ENCODE measurements at regions of chr11 and their contacts with region 1.

Region 1: GRCh38 chr11:62217191-62217748 is 8.8 kb downstream of the SCGB2A1 start:
- DNase-seq: no peak
- ATAC-seq: no peak
- H3K4me3 Mint-ChIP-seq: no peak overlapping the region
- H3K27ac Mint-ChIP-seq: no peak overlapping the region
- H3K4me1 Mint-ChIP-seq: no peaks in the 10 kb centered on the region
- H3K27me3 Mint-ChIP-seq: peaks cover 25% of the 10 kb centered on the region

Region 2: DNA sequence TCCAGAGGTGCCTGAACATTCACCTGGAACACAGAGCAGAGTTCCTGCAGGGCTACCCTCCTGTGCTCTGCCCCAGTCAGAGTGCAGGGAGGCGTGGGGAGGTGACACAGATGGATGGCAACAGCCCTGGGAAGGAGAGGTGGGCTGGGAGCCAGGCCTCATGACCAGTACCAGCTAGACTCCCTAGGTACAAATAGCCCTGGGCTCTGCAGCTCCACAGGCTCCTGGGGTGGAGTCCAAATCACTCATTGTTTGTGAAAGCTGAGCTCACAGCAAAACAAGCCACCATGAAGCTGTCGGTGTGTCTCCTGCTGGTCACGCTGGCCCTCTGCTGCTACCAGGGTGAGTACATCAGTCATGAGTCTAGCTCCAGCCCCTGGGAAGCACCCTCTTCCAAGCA is 24.8 kb after region 1 on chr11 and contains the start of gene SCGB1D2:
- CTCF ChIA-PET with region 1: no interaction called
- POLR2A ChIA-PET with region 1: no interaction called
- DNase-seq: no peak
- ATAC-seq: no peak
- H3K4me3 Mint-ChIP-seq: no peak within 1 kb of the TSS
- H3K27ac Mint-ChIP-seq: no peak within 1 kb of the TSS
- H3K4me1 Mint-ChIP-seq: no peaks in the 10 kb centered on the region
- H3K27me3 Mint-ChIP-seq: peaks cover 21% of the 10 kb centered on the region
- total RNA-seq, gene SCGB1D2: not detected

Region 3: GRCh38 chr11:62315431-62315830 is 98.2 kb after region 1 on chr11:
- CTCF ChIA-PET with region 1: interaction called, 10 read pairs
- POLR2A ChIA-PET with region 1: no interaction called
- DNase-seq: no peak
- ATAC-seq: no peak
- H3K4me3 Mint-ChIP-seq: no peak overlapping the region
- H3K27ac Mint-ChIP-seq: no peak overlapping the region
- H3K4me1 Mint-ChIP-seq: peaks cover 12% of the 10 kb centered on the region
- H3K27me3 Mint-ChIP-seq: peaks cover 16% of the 10 kb centered on the region